Activated CD4-positive, alpha-beta T cell treated with anti-CD3 and anti-CD28 coated beads for 36 hours (primary cell): ENCODE measurements at regions of chr14 and their contacts with region 1.

Region 1: GRCh38 chr14:32202998-32203882 is at the start of gene RNU6-8:
- DNase-seq: peak; percentile 90
- ATAC-seq: peak; percentile 86
- H3K4me3 Mint-ChIP-seq: peak within 1 kb of the TSS; percentile 87
- H3K27ac Mint-ChIP-seq: peak within 1 kb of the TSS; percentile 100
- H3K4me1 Mint-ChIP-seq: peaks cover 48% of the 10 kb centered on the region
- H3K27me3 Mint-ChIP-seq: peaks cover 3% of the 10 kb centered on the region
- total RNA-seq, gene RNU6-8: not detected

Region 2: GRCh38 chr14:30621940-30622830 is 1581.1 kb before region 1 on chr14 and contains the start of gene SCFD1:
- CTCF ChIA-PET with region 1: no interaction called
- POLR2A ChIA-PET with region 1: no interaction called
- intact Hi-C with region 1: loop called in 1 of 2 experiments (anchors 2 kb)
- DNase-seq: peak; percentile 97
- ATAC-seq: peak; percentile 98
- H3K4me3 Mint-ChIP-seq: peak within 1 kb of the TSS; percentile 78
- H3K27ac Mint-ChIP-seq: peak within 1 kb of the TSS; percentile 90
- H3K4me1 Mint-ChIP-seq: peaks cover 39% of the 10 kb centered on the region
- H3K27me3 Mint-ChIP-seq: no peaks in the 10 kb centered on the region
- total RNA-seq, gene SCFD1: 47.5 to 55.3 TPM

Region 3: DNA sequence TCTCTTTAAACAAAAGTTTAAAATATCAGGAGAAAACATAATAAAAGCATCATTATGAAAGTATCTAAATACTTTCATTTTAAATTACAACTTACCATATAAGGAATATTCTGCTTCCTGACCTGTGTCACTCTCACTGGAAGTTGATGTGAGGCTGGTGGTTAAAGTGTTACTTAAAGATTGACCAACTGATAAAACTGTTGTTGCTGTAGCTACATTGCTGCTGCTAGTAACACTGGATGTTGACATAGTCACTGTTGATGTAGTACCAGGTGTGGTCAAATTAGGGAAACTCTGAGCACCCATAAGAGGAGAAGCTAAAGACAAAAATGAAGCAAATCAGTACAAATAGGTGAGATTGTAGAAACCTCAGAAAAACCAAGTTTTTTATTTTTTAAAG is 1075.5 kb before region 1 on chr14:
- CTCF ChIA-PET with region 1: no interaction called
- POLR2A ChIA-PET with region 1: no interaction called
- intact Hi-C with region 1: loop called in 1 of 2 experiments (anchors 10 kb)
- DNase-seq: peak; percentile 8
- ATAC-seq: peak; percentile 93
- H3K4me3 Mint-ChIP-seq: no peak overlapping the region
- H3K27ac Mint-ChIP-seq: peak overlapping the region; percentile 1
- H3K4me1 Mint-ChIP-seq: peaks cover 31% of the 10 kb centered on the region
- H3K27me3 Mint-ChIP-seq: no peaks in the 10 kb centered on the region

Region 4: DNA sequence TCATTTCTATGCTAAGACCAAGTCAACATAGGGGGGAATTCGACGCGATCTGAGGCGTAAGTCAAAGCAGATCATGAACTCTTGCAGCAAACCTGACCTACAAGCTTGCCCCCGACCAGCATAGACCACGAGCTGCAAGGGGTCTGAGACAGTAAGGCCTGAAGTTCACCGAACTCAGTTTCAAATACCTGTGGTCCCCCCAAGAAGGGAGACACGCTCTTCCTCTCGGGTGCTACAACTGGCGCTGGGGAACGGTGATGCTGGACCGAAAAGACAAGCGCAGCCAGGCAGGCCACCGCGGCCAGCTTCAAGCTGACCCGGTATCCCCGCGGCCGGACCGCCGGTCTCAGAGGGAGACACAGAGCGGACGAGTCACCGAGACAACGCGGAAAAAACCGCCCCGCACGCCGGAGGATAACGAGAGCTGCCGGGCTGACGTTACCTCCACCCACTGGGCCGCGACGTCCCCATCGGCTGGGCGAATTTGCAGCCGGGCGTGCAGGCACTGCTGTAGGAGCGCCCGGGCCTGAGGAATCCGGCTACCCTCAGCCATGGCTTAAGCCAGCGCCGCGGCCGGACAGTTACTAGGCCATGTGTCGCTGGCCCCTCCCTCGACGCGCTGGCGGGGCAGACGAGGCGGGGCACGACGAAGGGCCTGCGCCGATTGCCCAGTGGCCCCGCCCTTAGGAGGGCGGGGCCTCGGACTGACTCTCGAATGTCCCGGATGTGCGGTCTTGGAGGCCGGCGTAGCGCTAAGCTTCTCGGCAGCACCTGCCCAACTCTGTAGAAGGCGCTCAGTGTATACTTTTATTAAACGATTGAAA is 746.2 kb before region 1 on chr14 and contains the start of gene DTD2:
- CTCF ChIA-PET with region 1: no interaction called
- POLR2A ChIA-PET with region 1: no interaction called
- intact Hi-C with region 1: loop called (anchors 1 to 2 kb)
- DNase-seq: peak; percentile 95
- ATAC-seq: peak; percentile 99
- H3K4me3 Mint-ChIP-seq: peak within 1 kb of the TSS; percentile 98
- H3K27ac Mint-ChIP-seq: peak within 1 kb of the TSS; percentile 95
- H3K4me1 Mint-ChIP-seq: peaks cover 22% of the 10 kb centered on the region
- H3K27me3 Mint-ChIP-seq: peaks cover 2% of the 10 kb centered on the region
- total RNA-seq, gene DTD2: 17.5 to 21.6 TPM

Region 5: GRCh38 chr14:31937721-31938346 is 265.4 kb before region 1 on chr14:
- CTCF ChIA-PET with region 1: no interaction called
- POLR2A ChIA-PET with region 1: no interaction called
- intact Hi-C with region 1: loop called (anchors 2 to 5 kb)
- DNase-seq: peak; percentile 87
- ATAC-seq: peak; percentile 100
- H3K4me3 Mint-ChIP-seq: no peak overlapping the region
- H3K27ac Mint-ChIP-seq: peak overlapping the region; percentile 28
- H3K4me1 Mint-ChIP-seq: peaks cover 17% of the 10 kb centered on the region
- H3K27me3 Mint-ChIP-seq: peaks cover 2% of the 10 kb centered on the region

Region 6: DNA sequence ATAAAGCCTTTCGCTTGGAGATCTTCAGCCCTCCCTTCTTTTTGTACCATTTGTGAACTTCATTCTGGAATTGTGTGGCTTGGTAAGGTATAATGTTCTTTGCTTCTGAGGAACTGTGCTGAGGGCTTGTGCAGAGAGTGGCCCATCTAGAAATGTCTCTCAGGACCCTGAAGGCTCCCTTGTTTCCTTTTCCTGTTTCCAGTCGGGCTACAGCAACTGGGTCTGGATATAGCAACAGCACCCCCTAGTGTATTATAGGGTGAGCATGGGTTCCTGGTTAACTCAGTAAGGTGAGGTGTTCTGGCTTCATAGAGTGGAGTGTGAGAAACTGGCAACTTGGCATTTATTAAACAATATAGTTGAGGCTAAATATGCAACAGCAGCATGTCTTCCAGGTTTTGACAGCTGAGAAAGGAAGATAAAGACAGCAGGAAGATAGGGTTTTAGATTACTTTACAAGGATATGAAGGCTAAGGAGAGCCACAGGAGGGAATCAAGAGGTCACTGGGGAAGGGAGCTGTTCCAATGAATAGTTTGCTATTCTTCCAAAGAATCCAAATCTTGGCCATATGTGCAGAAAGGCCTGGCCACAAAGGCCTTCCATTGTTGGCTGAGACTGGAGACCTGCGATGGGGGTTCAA is 48.9 kb after region 1 on chr14:
- CTCF ChIA-PET with region 1: interaction called, 20 read pairs
- POLR2A ChIA-PET with region 1: no interaction called
- intact Hi-C with region 1: loop called (anchors 2 to 5 kb)
- DNase-seq: peak; percentile 56
- ATAC-seq: peak; percentile 93
- H3K4me3 Mint-ChIP-seq: no peak overlapping the region
- H3K27ac Mint-ChIP-seq: no peak overlapping the region
- H3K4me1 Mint-ChIP-seq: no peaks in the 10 kb centered on the region
- H3K27me3 Mint-ChIP-seq: no peaks in the 10 kb centered on the region